AG04449 (cell line): ENCODE measurements at regions of chr16 and their contacts with region 1.

Region 1: DNA sequence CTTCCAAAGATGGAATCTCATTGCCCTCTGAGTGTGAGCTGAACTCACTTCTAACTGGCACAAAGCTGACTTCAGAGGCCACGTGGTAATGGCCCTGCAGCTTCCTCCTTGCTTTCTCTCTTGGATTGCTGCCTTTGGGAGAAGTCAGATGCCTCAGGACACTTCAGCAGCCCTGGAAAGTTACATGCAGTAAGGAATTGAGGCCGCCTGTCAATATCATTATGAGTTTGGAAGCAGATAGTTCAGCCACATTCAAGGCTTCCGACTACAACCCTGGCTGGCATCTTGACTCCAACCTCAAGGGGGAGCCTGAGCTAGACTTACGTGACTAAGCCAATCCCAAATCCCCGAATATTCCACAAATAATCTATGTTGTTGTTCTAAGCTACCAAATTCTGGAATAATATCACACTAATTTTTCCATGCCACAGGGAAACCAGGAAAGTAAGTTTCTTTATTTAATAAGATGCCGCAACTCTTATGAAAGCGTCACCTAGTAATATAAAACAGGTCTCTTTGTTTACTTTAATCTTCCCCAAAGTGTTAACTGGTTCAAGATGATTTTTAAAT is 13.6 kb downstream of the CEP20 start:
- DNase-seq: no peak
- H3K4me3 ChIP-seq: no peak overlapping the region
- CTCF ChIP-seq: peak; percentile 83

Region 2: DNA sequence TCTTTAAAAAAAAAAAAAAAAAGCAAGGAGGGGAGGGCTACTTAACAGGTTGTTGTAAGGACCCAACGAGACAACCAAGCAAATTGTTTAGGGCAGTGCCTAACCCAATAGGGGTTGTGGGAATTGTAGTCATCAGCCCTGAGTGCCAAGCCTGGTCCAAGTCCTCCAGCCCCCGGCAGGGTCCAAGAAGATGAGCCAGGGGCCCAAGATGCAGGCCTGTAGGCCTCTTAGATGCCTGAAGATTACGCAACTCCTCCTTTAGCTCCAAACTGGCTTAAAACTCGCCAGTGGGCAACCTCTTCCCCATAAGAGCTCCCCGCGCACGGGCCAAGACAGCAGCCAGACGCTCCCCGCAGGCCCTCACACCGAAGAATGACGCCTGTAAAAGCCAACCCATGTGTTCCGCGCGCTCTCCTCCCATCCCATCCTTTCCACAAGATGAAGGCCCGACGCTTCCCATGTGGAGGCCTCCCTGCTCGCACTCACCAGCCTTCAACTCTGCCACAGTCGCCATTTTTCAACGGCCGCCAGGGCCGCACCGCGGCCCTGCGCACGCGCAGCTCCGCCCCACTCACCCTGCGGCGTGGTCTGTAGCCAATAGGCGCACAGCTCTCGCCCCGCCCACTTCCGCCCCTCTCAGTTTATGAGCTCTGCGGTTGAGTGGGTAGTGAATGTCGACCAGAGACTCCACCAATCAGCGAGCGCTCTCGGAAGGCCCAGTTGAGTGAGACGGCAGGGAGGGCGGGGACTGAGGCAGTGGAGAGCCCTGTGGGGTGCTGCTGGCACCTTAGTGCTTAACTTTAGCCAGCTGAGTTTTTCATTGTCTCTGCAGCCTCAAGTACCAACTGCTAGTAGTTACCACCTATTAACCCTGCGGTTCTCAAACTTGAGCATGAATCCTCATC is 13.5 kb after region 1 on chr16 and contains the start of gene CEP20:
- CTCF ChIA-PET with region 1: interaction called, 44 read pairs
- POLR2A ChIA-PET with region 1: interaction called, 9 read pairs
- DNase-seq: peak; percentile 91
- H3K4me3 ChIP-seq: peak within 1 kb of the TSS; percentile 94
- CTCF ChIP-seq: peak; percentile 2

Region 3: DNA sequence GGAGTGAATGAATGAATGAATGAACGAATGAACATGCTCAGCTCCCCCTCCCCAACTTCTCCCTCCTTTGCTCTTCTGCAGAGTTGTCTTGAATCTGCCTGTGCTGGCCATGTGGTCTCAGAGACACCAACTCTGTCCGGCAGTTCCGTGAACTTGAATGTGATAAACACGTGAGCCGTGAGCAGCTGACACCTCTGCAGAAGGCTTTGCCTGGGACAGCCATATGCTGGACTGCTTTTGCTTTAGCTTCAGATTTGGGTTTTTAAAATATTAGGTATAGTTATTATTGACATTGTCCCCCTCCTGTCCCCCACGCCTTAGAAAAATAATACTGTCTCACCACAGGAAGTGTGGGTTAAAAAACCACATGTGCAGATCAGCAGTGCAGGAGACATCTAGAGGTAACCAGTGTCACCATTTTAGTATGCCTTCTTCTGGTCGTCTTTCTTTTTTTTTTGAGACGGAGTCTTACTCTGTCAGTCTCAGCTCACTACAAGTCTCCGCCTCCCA is 158.4 kb after region 1 on chr16:
- CTCF ChIA-PET with region 1: interaction called, 18 read pairs
- POLR2A ChIA-PET with region 1: no interaction called
- DNase-seq: no peak
- H3K4me3 ChIP-seq: no peak overlapping the region
- CTCF ChIP-seq: no peak

Region 4: DNA sequence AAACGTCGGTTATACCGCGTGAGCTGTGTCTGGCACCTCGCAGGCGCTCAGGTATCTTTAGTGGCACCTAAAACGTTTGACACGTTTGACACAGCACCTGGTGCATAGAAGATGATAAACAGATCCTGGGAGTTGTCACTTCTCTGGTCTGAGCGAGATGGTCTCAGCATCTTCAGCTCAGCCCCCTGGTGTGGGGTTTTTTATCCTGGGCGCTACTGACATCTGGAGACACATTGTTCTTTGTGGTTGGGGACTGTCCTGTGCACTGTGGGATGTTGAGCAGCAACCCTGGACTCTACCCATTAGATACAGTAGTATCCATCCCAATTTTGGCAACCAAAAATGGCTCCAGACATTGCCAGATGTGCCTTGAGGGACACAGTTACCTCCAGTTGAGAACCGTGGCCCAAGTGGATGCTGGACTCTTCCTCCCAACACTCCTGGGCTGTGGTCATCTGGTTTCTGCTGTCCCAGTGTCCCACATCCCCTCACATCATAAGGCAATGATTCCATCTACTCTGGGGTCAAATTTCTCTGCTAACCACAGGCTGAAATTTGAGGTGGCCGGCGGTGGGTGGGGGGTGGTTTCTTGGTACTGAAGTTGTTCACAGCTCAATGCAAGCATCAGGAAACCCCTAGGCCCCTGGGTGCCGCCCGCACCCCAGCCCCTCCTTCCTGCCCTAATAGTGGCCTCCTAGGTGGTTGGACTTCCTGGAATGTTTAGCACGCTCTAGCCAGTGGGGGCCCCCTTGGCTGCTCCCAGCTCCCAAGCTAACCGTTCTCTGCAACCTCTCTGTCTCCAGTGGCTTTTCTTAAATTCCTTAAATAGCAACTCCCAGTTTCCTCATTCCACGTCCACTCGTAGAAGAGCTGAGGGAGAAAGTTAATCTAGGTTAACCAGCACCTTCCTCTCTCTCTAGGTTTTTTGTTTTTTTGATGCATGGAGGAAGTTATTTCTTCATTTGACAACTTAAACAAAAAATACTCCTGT is 199.4 kb after region 1 on chr16:
- CTCF ChIA-PET with region 1: interaction called, 22 read pairs
- POLR2A ChIA-PET with region 1: no interaction called
- DNase-seq: peak; percentile 88
- H3K4me3 ChIP-seq: no peak overlapping the region
- CTCF ChIP-seq: peak; percentile 21